MCF 10A (cell line): ENCODE measurements at regions of chr14 and their contacts with region 1.

Region 1: DNA sequence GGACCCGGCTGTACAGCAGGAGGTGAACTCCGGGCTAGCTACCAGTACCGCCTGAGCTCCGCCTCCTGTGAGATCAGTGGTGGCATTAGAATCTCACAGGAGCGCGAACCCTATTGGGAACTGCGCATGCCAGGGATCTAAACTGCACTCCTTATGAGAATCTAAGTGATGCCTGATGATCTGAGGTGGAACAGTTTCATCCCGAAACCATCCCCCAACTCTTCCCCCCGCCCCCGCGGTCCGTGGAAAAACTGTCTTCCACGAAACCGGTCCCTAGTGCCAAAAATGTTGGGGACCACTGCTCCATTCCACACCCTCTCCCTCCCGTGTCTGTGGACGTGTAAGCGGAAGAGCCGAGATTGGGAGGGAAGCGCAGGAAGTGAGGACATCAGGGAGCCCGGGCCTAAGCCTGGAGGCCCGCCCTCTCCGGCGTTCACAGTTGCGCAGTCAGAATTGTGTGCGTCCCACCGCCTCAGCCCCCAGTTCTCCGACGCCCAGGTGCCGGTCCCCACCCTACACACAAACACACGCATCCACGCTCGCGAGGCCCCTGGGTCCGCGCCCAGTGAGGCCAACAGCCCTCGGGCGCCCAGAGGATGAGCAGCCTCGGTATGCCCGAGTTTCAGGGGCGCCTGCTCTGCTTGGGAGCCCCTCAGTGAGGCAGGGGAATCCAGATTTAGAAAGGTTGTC is 1.8 kb upstream of the RNASE4 start:
- DNase-seq: peak; percentile 92
- H3K4me3 Mint-ChIP-seq: no peak overlapping the region
- H3K27ac Mint-ChIP-seq: no peak overlapping the region
- H3K4me1 Mint-ChIP-seq: peaks cover 27% of the 10 kb centered on the region
- H3K27me3 Mint-ChIP-seq: no peaks in the 10 kb centered on the region
- CTCF ChIP-seq: no peak

Region 2: DNA sequence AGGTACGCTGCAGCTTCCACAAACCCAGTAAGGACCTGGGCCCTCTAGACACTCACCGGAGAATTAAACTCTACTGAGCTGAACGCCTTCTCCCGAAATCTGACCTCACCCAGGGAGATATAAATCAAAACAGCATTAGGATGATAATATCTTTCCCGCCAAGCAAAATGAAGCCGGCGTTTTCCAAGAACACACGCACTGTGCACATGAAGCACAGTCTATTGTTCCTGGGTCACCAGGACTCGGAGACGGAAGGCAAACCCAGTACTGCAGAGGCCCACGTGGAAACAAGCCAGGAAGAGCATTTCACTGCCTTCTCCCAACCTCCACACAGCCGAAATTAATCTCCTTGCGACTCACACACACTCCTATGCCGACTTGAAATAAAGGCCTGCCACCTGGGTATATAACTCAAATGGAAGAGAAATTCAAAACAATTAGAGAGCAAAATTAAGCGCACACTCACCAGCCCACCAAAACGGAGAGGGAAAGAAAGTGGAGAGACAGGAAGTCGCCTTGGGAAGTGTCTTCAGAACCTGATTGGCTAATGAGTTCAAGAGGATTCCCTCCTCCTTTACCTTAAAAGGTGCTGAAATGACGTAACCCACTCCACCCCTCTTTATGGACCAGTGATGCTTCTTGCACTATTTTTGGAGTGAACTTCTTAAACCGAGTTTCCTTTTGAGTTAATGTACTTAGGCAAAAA is 349.6 kb before region 1 on chr14 and contains the start of gene CCNB1IP1:
- CTCF ChIA-PET with region 1: interaction called, 22 read pairs
- POLR2A ChIA-PET with region 1: interaction called, 37 read pairs
- intact Hi-C with region 1: no loop called
- DNase-seq: peak; percentile 94
- H3K4me3 Mint-ChIP-seq: peak within 1 kb of the TSS; percentile 93
- H3K27ac Mint-ChIP-seq: peak within 1 kb of the TSS; percentile 94
- H3K4me1 Mint-ChIP-seq: peaks cover 25% of the 10 kb centered on the region
- H3K27me3 Mint-ChIP-seq: no peaks in the 10 kb centered on the region
- CTCF ChIP-seq: no peak
- total RNA-seq, gene CCNB1IP1: 105 and 108 TPM in 2 replicates

Region 3: DNA sequence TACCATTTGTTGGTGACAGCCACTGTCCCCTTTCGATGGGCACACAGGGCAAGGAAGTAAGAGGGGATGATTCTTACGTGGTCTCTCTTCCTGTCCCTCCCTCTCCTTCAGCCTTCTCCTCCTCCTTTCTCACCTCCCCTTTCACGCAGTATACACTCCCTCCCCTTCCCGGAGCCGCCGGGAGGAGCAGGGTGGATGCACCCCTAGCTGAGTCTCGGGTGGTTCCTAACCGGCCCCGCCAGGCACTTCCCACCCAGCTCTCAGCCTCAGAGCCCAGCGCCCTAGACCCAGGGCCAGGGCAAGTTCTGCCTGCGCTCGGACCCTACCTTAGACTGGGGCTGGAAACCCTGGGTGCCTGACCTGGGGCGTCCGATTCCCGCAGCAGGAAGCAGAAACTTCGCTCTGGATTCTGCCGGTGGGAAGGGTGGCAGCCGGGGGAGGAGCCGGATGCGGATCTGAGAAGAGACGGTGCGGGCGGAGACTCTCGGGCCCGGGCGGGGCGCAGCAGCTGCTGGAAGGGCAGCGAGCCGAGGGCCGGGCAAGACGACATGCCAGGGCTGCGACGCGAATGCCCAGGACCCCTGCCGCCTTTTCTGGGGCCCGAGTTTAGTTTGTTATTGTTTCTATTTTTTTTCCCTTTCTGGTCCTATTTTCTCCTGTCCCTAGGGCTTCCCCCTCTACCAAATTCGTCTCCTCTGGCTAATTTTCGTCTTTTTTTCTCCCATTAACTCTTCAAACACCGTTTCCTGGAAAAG is 269.4 kb before region 1 on chr14 and contains the start of gene TEP1:
- CTCF ChIA-PET with region 1: interaction called, 3 read pairs
- POLR2A ChIA-PET with region 1: interaction called, 34 read pairs
- intact Hi-C with region 1: no loop called
- DNase-seq: peak; percentile 87
- H3K4me3 Mint-ChIP-seq: peak within 1 kb of the TSS; percentile 77
- H3K27ac Mint-ChIP-seq: peak within 1 kb of the TSS; percentile 49
- H3K4me1 Mint-ChIP-seq: peaks cover 7% of the 10 kb centered on the region
- H3K27me3 Mint-ChIP-seq: no peaks in the 10 kb centered on the region
- CTCF ChIP-seq: no peak
- total RNA-seq, gene TEP1: 20.4 and 22.7 TPM in 2 replicates

Region 4: GRCh38 chr14:20461274-20462001 is 221.1 kb before region 1 on chr14 and contains the start of gene PIP4P1:
- CTCF ChIA-PET with region 1: interaction called, 4 read pairs
- POLR2A ChIA-PET with region 1: interaction called, 65 read pairs
- intact Hi-C with region 1: no loop called
- DNase-seq: peak; percentile 100
- H3K4me3 Mint-ChIP-seq: peak within 1 kb of the TSS; percentile 76
- H3K27ac Mint-ChIP-seq: peak within 1 kb of the TSS; percentile 92
- H3K4me1 Mint-ChIP-seq: peaks cover 21% of the 10 kb centered on the region
- H3K27me3 Mint-ChIP-seq: no peaks in the 10 kb centered on the region
- CTCF ChIP-seq: no peak
- total RNA-seq, gene PIP4P1: 22.5 and 34.9 TPM in 2 replicates

Region 5: GRCh38 chr14:20624495-20625070 is 58.0 kb before region 1 on chr14:
- CTCF ChIA-PET with region 1: interaction called, 4 read pairs
- POLR2A ChIA-PET with region 1: interaction called, 123 read pairs
- intact Hi-C with region 1: loop called (anchors 1 kb)
- DNase-seq: peak; percentile 87
- H3K4me3 Mint-ChIP-seq: peak overlapping the region; percentile 79
- H3K27ac Mint-ChIP-seq: peak overlapping the region; percentile 76
- H3K4me1 Mint-ChIP-seq: peaks cover 42% of the 10 kb centered on the region
- H3K27me3 Mint-ChIP-seq: no peaks in the 10 kb centered on the region
- CTCF ChIP-seq: no peak

Region 6: GRCh38 chr14:20662968-20663732 is 19.4 kb before region 1 on chr14:
- CTCF ChIA-PET with region 1: interaction called, 4 read pairs
- POLR2A ChIA-PET with region 1: interaction called, 22 read pairs
- intact Hi-C with region 1: loop called (anchors 1 kb)
- DNase-seq: peak; percentile 67
- H3K4me3 Mint-ChIP-seq: peak overlapping the region; percentile 65
- H3K27ac Mint-ChIP-seq: no peak overlapping the region
- H3K4me1 Mint-ChIP-seq: peaks cover 13% of the 10 kb centered on the region
- H3K27me3 Mint-ChIP-seq: peaks cover 18% of the 10 kb centered on the region
- CTCF ChIP-seq: peak; percentile 45